Endothelial cell of umbilical vein (primary cell): ENCODE measurements at regions of chr7 and their contacts with region 1.

Region 1: DNA sequence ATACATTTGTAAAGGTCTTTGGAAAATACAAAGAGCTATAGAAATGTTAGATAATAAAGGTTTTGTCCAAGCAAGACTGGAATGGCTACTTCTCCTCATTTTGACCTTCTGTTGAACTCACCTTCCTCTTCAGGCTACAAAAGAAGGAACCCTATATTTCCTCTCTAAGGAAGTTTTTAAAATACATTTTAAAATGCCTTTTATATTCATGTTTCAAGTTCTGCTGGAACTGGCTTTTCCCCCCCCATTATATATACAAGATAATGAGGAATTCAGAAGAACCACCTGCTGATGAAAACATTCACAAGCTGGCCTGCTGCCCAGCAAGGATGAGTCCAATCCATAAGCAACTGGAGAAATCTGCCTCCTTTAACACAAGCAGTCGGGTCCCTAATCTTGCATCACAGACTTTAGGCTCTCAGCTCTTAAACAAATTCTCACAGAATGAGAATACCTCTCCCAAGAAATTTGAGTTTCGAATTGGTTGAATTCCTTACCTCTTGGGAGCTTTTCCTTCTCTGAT is 44.6 kb downstream of the MTERF1 start:
- DNase-seq: peak; percentile 14
- H3K4me3 ChIP-seq: no peak overlapping the region
- H3K27ac ChIP-seq: no peak overlapping the region
- H3K4me1 ChIP-seq: no peaks in the 10 kb centered on the region
- H3K27me3 ChIP-seq: no peaks in the 10 kb centered on the region
- CTCF ChIP-seq: no peak
- POLR2A ChIP-seq: no peak

Region 2: DNA sequence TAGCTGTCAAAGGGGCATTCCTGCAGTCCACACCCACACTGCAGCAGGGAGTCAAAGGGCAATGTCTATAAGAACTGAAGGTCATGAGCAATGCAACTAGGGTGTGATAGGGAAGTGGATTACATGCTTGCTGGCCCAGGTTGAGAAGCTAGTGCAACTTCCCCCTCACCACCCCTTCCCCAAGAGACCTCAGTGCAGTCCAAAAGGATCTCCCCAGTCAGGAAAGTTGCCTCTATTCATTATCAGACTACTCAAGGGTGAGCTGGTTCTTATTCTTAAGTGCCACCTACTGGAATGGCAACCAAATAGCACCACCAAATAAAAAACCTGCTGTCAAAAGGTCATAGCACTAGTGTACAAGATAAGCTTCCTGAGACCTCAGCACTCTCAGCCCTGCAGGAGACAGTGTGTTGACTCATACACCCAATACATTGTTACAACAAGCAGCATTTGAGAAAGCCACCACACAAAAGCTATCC is 16.4 kb after region 1 on chr7:
- CTCF ChIA-PET with region 1: interaction called, 51 read pairs
- POLR2A ChIA-PET with region 1: no interaction called
- dilution Hi-C with region 1: no loop called
- intact Hi-C with region 1: no loop called
- DNase-seq: peak; percentile 48
- H3K4me3 ChIP-seq: no peak overlapping the region
- H3K27ac ChIP-seq: no peak overlapping the region
- H3K4me1 ChIP-seq: no peaks in the 10 kb centered on the region
- H3K27me3 ChIP-seq: no peaks in the 10 kb centered on the region
- CTCF ChIP-seq: peak in 1 of 2 donors; percentile 29
- POLR2A ChIP-seq: no peak

Region 3: GRCh38 chr7:91869661-91870060 is 33.8 kb after region 1 on chr7:
- CTCF ChIA-PET with region 1: interaction called, 19 read pairs
- POLR2A ChIA-PET with region 1: no interaction called
- dilution Hi-C with region 1: no loop called
- intact Hi-C with region 1: no loop called
- DNase-seq: no peak
- H3K4me3 ChIP-seq: no peak overlapping the region
- H3K27ac ChIP-seq: no peak overlapping the region
- H3K4me1 ChIP-seq: no peaks in the 10 kb centered on the region
- H3K27me3 ChIP-seq: no peaks in the 10 kb centered on the region
- CTCF ChIP-seq: no peak
- POLR2A ChIP-seq: no peak

Region 4: GRCh38 chr7:91929463-91929862 is 93.6 kb after region 1 on chr7:
- CTCF ChIA-PET with region 1: no interaction called
- POLR2A ChIA-PET with region 1: no interaction called
- dilution Hi-C with region 1: no loop called
- intact Hi-C with region 1: no loop called
- DNase-seq: no peak
- H3K4me3 ChIP-seq: no peak overlapping the region
- H3K27ac ChIP-seq: no peak overlapping the region
- H3K4me1 ChIP-seq: no peaks in the 10 kb centered on the region
- H3K27me3 ChIP-seq: peaks cover 2 to 5% of the 10 kb centered on the region in 2 experiments
- CTCF ChIP-seq: no peak
- POLR2A ChIP-seq: no peak

Region 5: DNA sequence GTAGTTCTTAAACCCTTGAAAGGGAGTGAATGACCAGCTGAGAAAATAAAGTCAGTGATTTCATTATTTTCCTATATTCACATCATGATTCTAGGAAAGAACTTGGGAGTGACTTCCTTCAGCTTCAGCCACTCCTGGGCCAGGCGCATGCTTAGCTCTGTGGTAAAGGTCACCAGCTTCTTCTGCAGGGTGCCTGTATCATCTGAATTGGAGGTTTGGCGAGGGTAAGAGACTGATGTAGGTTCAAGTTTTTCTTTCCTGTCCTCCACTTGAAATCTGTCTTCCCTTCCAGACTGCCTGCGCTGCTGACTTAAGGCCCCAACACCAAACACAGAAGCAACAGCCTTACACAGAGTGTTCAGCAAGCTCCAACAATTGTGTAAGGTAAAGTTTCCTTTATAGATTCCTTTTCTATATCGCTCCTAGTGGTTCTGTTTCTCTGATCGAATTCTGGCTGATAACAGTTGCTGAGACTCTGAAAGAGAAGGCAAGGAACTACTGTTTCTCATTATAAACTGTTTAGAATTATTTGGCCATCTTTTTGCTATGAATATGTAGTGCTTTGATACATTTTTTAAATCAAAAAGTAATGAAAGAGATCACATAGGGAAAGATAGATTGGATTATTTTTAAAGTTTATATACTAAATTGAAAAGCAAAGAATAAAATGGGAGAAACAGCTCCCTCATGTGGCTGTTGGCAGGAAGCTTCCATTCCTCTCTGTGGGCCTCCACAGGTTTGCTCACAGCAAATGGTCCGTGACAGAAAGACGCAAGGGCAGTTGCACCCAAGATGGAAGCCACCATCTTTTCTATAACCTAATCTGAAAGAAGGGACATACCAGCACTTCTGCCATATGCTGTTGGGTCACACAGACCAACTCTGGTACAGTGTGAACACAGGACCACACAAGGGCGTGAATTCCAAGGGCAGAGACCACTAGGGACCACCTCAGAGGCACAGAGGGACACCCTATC is 625.4 kb after region 1 on chr7:
- CTCF ChIA-PET with region 1: interaction called, 39 read pairs
- POLR2A ChIA-PET with region 1: no interaction called
- dilution Hi-C with region 1: no loop called
- intact Hi-C with region 1: no loop called
- DNase-seq: peak; percentile 57
- H3K4me3 ChIP-seq: no peak overlapping the region
- H3K27ac ChIP-seq: no peak overlapping the region
- H3K4me1 ChIP-seq: peaks cover 5% of the 10 kb centered on the region
- H3K27me3 ChIP-seq: no peaks in the 10 kb centered on the region
- CTCF ChIP-seq: peak; percentile 74 to 76
- POLR2A ChIP-seq: no peak